ENCODE measurements at regions of chr19 and their contacts with region 1.

Region 1: DNA sequence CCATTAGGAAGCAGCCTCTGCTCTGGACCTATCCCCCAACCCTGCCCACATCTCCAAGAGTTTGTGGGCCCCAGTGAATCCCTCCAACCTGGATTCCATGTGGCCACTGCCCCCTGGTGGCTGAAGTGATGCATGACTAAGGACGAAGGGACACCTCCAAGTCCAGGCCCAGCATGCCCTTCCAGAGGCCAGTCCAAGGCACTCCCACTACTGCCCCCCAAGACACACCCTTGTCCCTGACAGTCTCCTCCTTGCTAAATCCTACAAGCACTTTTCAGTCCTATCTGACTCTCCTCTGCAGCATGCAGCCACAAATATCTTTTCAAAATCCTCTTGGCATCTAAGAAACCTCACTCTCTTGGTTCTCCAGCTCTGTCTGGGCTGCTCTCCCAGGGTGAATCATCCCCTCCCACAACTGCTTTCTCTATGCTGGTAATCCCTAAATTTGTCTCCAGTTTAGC is 33.0 kb downstream of the DEDD2 start:
- DNase-seq: peak; percentile 63 to 85 (median 76)
- ATAC-seq: peak; percentile 86
- H3K4me3 ChIP-seq: no peak overlapping the region
- H3K4me1 ChIP-seq: peaks cover 9% of the 10 kb centered on the region
- CTCF ChIP-seq: peak; percentile 81

Region 2: GRCh38 chr19:42075616-42076379 is 108.6 kb before region 1 on chr19 and contains the start of gene ZNF574:
- intact Hi-C with region 1: no loop called
- DNase-seq: peak; percentile 98 to 99 (median 98)
- ATAC-seq: peak; percentile 97
- H3K4me3 ChIP-seq: peak within 1 kb of the TSS; percentile 85
- H3K4me1 ChIP-seq: peaks cover 25% of the 10 kb centered on the region
- CTCF ChIP-seq: no peak
- total RNA-seq, gene ZNF574: 11.2 to 17.5 (median 17.0) TPM

Region 3: GRCh38 chr19:42132851-42133528 is 51.4 kb before region 1 on chr19:
- intact Hi-C with region 1: loop called (anchors 5 kb)
- DNase-seq: peak; percentile 81 to 89 (median 84)
- ATAC-seq: peak; percentile 89
- H3K4me3 ChIP-seq: no peak overlapping the region
- H3K4me1 ChIP-seq: peaks cover 4% of the 10 kb centered on the region
- CTCF ChIP-seq: peak; percentile 91

Measured in mucosa of descending colon (tissue), 3 donors.